ENCODE measurements at regions of chr1 and their contacts with region 1.

Region 1: GRCh38 chr1:48249868-48250267 is 27.4 kb downstream of the SLC5A9 start:
- DNase-seq: no peak
- H3K4me3 ChIP-seq: no peak overlapping the region
- H3K27ac ChIP-seq: no peak overlapping the region
- H3K4me1 ChIP-seq: peaks cover 13% of the 10 kb centered on the region
- H3K27me3 ChIP-seq: no peaks in the 10 kb centered on the region
- CTCF ChIP-seq: no peak

Region 2: DNA sequence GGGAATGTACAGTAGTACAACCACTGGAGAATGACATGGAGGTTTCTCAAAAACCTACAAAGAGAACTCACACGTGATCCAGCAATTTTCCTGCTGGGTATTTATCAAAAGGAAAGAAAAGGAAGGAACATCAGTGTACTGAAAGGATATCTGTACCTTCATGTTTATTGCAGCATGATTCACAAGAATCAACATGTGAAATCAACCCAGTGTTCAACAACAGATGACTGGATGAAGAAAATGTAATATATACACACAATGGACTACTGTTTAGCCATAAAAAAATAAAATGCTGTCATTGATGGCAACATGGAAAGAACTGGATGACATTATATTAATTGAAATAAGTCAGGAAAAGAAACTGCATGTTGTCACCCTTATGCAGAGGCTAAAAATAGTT is 1289.6 kb before region 1 on chr1:
- intact Hi-C with region 1: no loop called
- DNase-seq: no peak
- H3K4me3 ChIP-seq: no peak overlapping the region
- H3K27ac ChIP-seq: no peak overlapping the region
- H3K4me1 ChIP-seq: no peaks in the 10 kb centered on the region
- H3K27me3 ChIP-seq: no peaks in the 10 kb centered on the region
- CTCF ChIP-seq: no peak

Region 3: GRCh38 chr1:48182441-48182840 is 67.4 kb before region 1 on chr1:
- intact Hi-C with region 1: no loop called
- DNase-seq: no peak
- H3K4me3 ChIP-seq: no peak overlapping the region
- H3K27ac ChIP-seq: no peak overlapping the region
- H3K4me1 ChIP-seq: no peaks in the 10 kb centered on the region
- H3K27me3 ChIP-seq: no peaks in the 10 kb centered on the region
- CTCF ChIP-seq: no peak

Region 4: DNA sequence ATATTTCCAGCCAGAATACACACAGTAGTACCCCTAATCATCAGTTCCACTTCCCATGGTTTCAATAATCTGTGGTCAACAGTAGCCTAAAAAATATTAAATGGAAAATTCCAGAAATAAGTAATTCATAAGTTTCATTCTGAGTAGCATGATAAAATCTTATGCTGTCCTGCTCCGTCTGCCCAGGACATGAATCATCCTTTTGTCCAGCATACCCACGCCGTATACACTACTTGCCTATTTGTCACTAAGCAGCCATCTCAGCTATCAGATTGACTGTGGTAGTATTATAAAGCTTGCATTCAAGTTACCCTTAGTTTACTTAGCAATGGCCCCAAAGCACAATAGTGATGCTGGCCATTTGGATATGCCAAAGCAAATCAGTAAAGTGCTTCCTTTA is 91.4 kb after region 1 on chr1:
- intact Hi-C with region 1: no loop called
- DNase-seq: no peak
- H3K4me3 ChIP-seq: no peak overlapping the region
- H3K27ac ChIP-seq: no peak overlapping the region
- H3K4me1 ChIP-seq: no peaks in the 10 kb centered on the region
- H3K27me3 ChIP-seq: no peaks in the 10 kb centered on the region
- CTCF ChIP-seq: no peak

Region 5: GRCh38 chr1:48498096-48498791 is 248.4 kb after region 1 on chr1:
- intact Hi-C with region 1: loop called (anchors 10 kb)
- DNase-seq: peak; percentile 83
- H3K4me3 ChIP-seq: peak overlapping the region; percentile 17
- H3K27ac ChIP-seq: no peak overlapping the region
- H3K4me1 ChIP-seq: peaks cover 6% of the 10 kb centered on the region
- H3K27me3 ChIP-seq: no peaks in the 10 kb centered on the region
- CTCF ChIP-seq: peak; percentile 97